HEK293 (cell line): ENCODE measurements at regions of chr9 and their contacts with region 1.

Region 1: DNA sequence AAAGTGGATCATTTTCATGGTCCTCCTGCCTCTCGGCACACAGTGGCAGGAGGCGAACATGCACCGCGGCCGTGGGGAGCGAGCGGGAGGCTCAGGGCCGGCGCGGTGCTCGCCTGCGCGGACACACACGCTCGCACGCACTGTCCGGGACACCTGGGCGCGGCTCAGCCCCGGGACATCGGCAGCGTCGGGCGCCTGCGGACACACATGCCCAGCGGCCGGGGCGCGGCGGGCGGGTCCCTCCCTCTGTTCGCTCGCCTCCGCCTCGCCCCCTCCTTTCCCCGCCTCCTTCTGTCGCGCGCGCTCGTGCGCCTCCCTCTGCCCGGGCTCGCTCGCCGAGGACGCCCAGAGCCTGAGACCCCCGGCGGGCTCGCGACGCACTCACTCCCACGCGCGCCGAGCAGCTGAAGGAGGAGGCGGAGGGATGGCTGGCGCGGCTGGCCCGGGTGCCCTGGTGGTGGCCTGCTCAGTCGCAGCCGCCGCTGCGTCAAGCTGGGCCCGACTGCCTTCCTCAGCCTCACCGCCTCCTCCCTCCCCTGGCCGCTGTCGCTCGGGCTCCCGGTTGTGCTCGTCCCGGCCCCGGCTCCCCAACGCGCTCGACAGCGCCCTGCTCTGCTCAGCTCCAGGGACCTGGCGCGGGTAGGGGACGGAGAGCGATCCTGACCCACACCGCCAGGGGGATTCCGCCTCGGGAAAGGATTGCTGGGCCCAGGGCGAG is at the start of gene FRMD3:
- H3K4me3 ChIP-seq: peak within 1 kb of the TSS; percentile 64
- H3K27ac ChIP-seq: peak within 1 kb of the TSS; percentile 46; the same call in 1 of the 2 replicates
- H3K4me1 ChIP-seq: no peaks in the 10 kb centered on the region
- CTCF ChIP-seq: peak; percentile 95

Region 2: DNA sequence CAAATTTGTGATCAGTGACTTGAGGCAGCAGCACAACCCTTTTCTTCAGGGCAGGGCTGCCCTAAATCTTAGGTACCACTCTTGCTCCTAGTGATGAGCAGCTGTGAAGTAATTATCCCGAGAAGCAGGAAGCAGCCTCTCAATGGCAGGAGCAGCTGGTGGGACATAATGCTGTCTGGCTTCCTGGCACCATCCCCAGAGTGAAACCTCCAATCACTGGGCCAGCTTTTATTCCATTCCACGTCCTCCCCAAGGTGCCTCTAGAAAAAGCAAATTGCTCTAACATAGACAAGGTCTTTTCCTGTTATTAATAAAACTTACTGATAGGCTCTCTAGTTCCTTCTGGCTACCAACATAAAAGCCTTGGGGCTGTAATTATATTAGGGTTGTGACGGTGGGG is 154.1 kb before region 1 on chr9:
- CTCF ChIA-PET with region 1: no interaction called
- POLR2A ChIA-PET with region 1: no interaction called
- H3K4me3 ChIP-seq: no peak overlapping the region
- H3K27ac ChIP-seq: no peak overlapping the region
- H3K4me1 ChIP-seq: no peaks in the 10 kb centered on the region
- CTCF ChIP-seq: no peak

Region 3: GRCh38 chr9:83554278-83554677 is 15.9 kb after region 1 on chr9:
- CTCF ChIA-PET with region 1: interaction called, 13 read pairs
- POLR2A ChIA-PET with region 1: no interaction called
- H3K4me3 ChIP-seq: no peak overlapping the region
- H3K27ac ChIP-seq: no peak overlapping the region
- H3K4me1 ChIP-seq: no peaks in the 10 kb centered on the region
- CTCF ChIP-seq: no peak